Upper lobe of right lung (tissue), 1 donor: ENCODE measurements at regions of chr14 and their contacts with region 1.

Region 1: GRCh38 chr14:21014761-21015190 is 10.1 kb downstream of the NDRG2 start:
- DNase-seq: peak; percentile 76
- ATAC-seq: peak; percentile 93
- H3K4me3 ChIP-seq: no peak overlapping the region
- H3K27ac ChIP-seq: no peak overlapping the region
- H3K4me1 ChIP-seq: peaks cover 7% of the 10 kb centered on the region
- H3K27me3 ChIP-seq: no peaks in the 10 kb centered on the region
- CTCF ChIP-seq: peak; percentile 94

Region 2: DNA sequence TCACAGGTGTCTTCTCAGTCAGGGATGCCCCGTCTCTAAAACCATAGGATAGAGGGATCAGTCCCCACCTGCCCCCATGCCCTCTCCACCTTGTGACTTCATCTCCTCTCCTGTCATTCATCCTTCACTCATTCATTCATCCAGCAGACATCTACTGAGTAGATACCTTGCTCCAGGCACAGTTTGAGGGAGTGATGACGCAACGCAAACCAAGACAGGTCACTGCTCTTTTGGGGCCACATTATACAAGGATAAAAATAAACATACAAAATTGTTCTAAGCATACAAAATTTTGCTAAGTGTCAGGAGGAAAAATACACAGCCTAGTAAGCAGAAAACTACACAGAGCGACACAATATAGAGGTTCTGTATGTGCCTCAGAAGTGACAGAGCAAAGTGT is 92.3 kb before region 1 on chr14:
- intact Hi-C with region 1: no loop called
- DNase-seq: no peak
- ATAC-seq: no peak
- H3K4me3 ChIP-seq: no peak overlapping the region
- H3K27ac ChIP-seq: no peak overlapping the region
- H3K4me1 ChIP-seq: no peaks in the 10 kb centered on the region
- H3K27me3 ChIP-seq: no peaks in the 10 kb centered on the region
- CTCF ChIP-seq: no peak

Region 3: GRCh38 chr14:21081521-21082142 is 66.9 kb after region 1 on chr14:
- intact Hi-C with region 1: no loop called
- DNase-seq: no peak
- ATAC-seq: no peak
- H3K4me3 ChIP-seq: no peak overlapping the region
- H3K27ac ChIP-seq: no peak overlapping the region
- H3K4me1 ChIP-seq: peaks cover 14% of the 10 kb centered on the region
- H3K27me3 ChIP-seq: no peaks in the 10 kb centered on the region
- CTCF ChIP-seq: no peak

Region 4: DNA sequence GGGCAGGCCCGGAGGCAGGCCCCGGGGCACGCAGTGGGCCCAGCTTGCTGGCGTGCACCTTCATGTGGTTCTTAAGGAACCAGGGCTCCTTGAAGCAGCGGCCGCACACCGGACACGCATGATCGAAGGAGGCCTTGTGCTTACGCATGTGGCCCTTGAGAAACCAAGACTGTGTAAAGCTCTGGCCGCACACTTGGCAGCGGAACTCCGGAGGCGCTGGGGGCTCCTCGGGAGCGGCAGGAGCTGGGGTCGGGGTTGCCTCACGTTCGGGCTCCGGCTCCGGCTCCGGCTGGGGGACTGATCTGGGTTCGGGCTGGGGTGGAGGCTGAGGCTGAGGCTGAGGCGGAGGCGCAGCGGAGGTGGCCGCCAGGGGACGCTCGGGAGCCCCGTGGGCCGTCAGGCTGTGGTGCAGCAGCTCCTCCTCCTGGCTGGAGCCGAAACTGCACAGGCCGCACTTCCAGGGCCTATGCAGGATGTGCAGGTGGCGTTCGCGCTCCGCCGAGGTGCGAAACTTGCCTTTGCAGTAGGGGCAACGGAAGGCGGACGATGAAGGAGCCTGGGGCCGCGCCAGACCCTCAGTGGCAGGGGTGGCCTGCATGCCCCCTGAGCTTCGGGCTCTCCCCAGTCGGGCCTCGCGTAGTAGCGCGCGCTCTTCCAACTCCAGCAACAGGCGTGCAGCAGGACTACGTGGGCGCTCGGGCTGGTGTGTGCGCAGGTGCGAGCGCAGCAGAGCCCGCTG is 77.7 kb after region 1 on chr14:
- intact Hi-C with region 1: loop called (anchors 5 kb)
- DNase-seq: peak; percentile 93
- ATAC-seq: peak; percentile 98
- H3K4me3 ChIP-seq: no peak overlapping the region
- H3K27ac ChIP-seq: no peak overlapping the region
- H3K4me1 ChIP-seq: peaks cover 13% of the 10 kb centered on the region
- H3K27me3 ChIP-seq: no peaks in the 10 kb centered on the region
- CTCF ChIP-seq: peak; percentile 100

Region 5: DNA sequence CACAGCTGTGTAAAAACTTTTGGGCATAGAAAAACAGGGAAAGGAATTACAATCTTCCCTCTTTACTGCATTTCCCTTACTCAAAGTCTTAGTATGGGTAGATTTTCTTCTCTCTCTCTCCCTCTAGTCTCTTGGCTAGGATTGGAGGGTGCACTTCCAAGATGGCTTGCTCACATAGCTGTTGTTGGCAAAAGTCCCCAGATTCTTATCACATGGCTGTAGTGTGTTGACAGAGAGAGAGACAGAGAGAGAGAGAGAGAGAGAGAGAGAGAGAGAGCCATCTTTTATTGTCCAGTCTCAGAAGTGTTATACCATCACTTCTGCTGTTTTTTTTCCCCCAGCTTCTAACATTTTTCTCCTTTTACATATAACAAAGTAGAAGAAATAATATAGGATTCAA is 632.6 kb after region 1 on chr14:
- intact Hi-C with region 1: no loop called
- DNase-seq: no peak
- ATAC-seq: no peak
- H3K4me3 ChIP-seq: no peak overlapping the region
- H3K27ac ChIP-seq: no peak overlapping the region
- H3K4me1 ChIP-seq: no peaks in the 10 kb centered on the region
- H3K27me3 ChIP-seq: no peaks in the 10 kb centered on the region
- CTCF ChIP-seq: no peak